ENCODE measurements at regions of chr4 and their contacts with region 1.

Region 1: DNA sequence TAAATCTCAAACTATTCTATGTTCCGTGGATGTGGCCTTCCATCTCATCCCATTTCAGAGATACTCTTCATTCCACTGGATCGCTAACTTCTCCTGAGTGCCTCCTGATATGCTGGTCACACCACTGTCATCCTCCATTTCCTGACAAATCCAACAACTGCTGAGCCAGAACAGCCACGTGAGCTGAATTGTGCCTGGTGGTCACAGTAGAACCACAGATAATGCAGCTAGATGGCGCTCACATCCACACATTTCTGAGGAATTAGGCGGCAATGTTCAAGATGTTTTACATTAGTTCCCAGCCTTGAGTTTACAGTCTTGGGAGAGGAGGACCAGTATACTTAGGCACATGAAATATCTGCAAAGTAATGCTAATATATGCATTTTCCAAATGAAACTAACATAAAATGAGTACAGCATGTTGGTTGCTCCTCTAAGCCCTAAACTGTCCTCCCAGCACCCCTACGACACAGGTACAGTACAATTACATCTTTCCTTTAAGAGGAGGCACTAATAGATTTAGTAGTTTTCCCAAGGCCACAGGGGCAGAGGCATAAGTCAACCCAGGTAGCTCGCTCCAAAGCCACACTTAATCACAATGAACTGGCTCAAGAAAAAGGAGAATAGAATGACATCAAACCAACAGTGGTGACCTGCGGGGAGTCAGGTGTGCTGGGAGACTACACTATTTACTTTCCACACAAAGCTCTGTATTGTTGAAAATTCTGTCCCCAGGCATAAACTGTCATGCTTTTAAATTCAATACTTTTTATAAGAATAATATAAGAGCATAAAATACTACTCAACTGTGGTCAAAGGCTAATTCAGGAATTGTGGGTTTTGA is 134.2 kb downstream of the CHIC2 start:
- DNase-seq: peak; percentile 62
- H3K4me3 Mint-ChIP-seq: no peak overlapping the region
- H3K27ac Mint-ChIP-seq: no peak overlapping the region
- H3K4me1 Mint-ChIP-seq: no peaks in the 10 kb centered on the region
- H3K27me3 Mint-ChIP-seq: no peaks in the 10 kb centered on the region
- CTCF ChIP-seq: peak; percentile 34

Region 2: GRCh38 chr4:53997901-53998300 is 67.7 kb after region 1 on chr4:
- CTCF ChIA-PET with region 1: no interaction called
- intact Hi-C with region 1: loop called (anchors 5 kb)
- DNase-seq: peak; percentile 25
- H3K4me3 Mint-ChIP-seq: no peak overlapping the region
- H3K27ac Mint-ChIP-seq: no peak overlapping the region
- H3K4me1 Mint-ChIP-seq: peaks cover 9% of the 10 kb centered on the region
- H3K27me3 Mint-ChIP-seq: no peaks in the 10 kb centered on the region
- CTCF ChIP-seq: no peak

Region 3: DNA sequence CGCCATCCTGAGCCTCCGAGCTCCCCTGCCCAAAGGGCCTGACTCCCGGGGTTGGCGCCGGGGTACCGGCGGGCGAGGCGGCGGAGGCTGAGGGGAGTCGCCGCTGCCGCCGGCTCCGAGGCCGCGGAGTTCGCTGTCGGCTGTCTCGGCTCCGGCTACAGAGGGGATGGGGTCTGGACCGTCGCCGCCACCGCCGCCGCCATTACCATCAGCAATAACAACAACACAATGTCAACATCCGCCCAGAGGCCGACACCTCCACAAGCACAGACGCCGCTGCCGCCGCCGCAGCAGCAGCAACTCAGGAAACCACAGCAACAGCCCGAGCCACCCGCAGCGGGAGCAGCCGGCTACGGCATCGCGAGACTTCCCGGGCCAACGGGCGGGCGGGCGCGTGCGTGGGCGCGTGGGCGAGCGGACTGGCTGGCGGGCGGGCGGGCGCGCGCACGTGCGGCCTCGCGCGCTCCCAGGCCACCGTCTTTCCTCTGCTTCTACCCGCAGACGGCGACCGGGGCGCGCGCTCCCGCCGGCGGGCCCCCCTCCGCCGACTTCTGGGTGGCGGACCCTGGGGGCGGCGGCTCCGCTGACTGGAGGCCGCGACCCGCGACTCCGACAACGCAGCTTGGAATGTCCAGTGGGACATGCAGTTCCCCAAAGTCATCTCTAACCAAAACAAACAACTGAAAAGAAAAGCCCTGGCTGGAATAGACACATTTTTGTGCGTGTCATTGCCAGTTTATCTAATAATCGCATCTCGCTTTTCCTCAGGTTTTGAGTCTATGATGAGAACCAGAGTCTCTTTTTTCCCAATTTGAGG is 134.3 kb after region 1 on chr4 and contains the start of gene CHIC2:
- CTCF ChIA-PET with region 1: no interaction called
- intact Hi-C with region 1: loop called (anchors 5 kb)
- DNase-seq: peak; percentile 93
- H3K4me3 Mint-ChIP-seq: peak within 1 kb of the TSS; percentile 75
- H3K27ac Mint-ChIP-seq: peak within 1 kb of the TSS; percentile 73
- H3K4me1 Mint-ChIP-seq: peaks cover 31% of the 10 kb centered on the region
- H3K27me3 Mint-ChIP-seq: no peaks in the 10 kb centered on the region
- CTCF ChIP-seq: no peak
- total RNA-seq, gene CHIC2: 12.0 and 16.5 TPM in 2 replicates

Region 4: GRCh38 chr4:54217642-54218495 is 287.7 kb after region 1 on chr4:
- CTCF ChIA-PET with region 1: interaction called, 13 read pairs
- intact Hi-C with region 1: loop called (anchors 2 kb)
- DNase-seq: peak; percentile 66
- H3K4me3 Mint-ChIP-seq: peak overlapping the region; percentile 58
- H3K27ac Mint-ChIP-seq: no peak overlapping the region
- H3K4me1 Mint-ChIP-seq: peaks cover 14% of the 10 kb centered on the region
- H3K27me3 Mint-ChIP-seq: peaks cover 9% of the 10 kb centered on the region
- CTCF ChIP-seq: peak; percentile 74

Region 5: GRCh38 chr4:54255876-54256275 is 325.7 kb after region 1 on chr4:
- CTCF ChIA-PET with region 1: no interaction called
- intact Hi-C with region 1: no loop called
- DNase-seq: no peak
- H3K4me3 Mint-ChIP-seq: no peak overlapping the region
- H3K27ac Mint-ChIP-seq: no peak overlapping the region
- H3K4me1 Mint-ChIP-seq: no peaks in the 10 kb centered on the region
- H3K27me3 Mint-ChIP-seq: no peaks in the 10 kb centered on the region
- CTCF ChIP-seq: no peak